Calu3 (cell line): ENCODE measurements at regions of chr4 and their contacts with region 1.

Region 1: GRCh38 chr4:143085224-143085623 is 99.5 kb upstream of the USP38 start:
- DNase-seq: no peak
- H3K4me3 Mint-ChIP-seq: no peak overlapping the region
- H3K27ac Mint-ChIP-seq: no peak overlapping the region
- H3K4me1 Mint-ChIP-seq: peaks cover 61% of the 10 kb centered on the region
- H3K27me3 Mint-ChIP-seq: no peaks in the 10 kb centered on the region
- CTCF ChIP-seq: no peak

Region 2: DNA sequence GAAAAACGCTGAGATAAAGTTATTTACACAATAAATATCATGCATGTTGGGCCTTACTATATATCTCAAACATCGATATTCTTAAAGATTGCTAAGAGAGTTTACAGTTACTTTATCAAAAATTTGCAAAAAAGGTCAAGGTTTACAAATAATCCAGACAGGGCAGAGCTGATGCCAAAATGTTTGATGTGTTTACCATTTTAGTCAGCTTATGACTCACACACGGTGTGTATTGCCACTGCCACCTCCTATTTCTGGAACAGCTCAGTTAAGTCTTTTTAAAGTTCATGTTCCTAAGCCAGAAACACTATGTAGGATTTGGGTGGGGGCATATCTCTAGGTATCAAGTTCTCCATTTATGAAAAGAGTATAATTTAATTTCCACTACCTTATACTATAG is 819.7 kb before region 1 on chr4:
- CTCF ChIA-PET with region 1: no interaction called
- intact Hi-C with region 1: no loop called
- DNase-seq: peak; percentile 11
- H3K4me3 Mint-ChIP-seq: peak overlapping the region; percentile 24
- H3K27ac Mint-ChIP-seq: peak overlapping the region; percentile 81
- H3K4me1 Mint-ChIP-seq: peaks cover 39% of the 10 kb centered on the region
- H3K27me3 Mint-ChIP-seq: no peaks in the 10 kb centered on the region
- CTCF ChIP-seq: no peak

Region 3: DNA sequence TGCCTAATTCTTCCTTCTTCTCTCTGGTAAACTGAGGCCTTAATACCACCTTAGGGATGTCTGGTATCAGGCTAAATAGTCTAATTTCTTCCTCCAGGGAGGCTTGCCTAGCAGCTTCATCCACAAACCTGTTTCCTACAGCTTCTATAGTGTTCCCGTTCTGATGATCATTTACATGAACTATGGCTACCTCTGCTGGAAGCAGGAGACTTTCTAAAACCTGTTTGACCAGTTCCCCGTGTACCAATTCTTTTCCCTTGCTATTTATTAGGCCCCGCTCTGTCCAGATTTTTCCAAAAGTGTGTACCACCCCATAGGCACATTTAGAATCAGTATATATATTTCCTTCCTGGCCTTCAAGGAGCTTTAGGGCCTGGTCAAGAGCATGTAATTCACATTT is 93.7 kb after region 1 on chr4:
- CTCF ChIA-PET with region 1: no interaction called
- intact Hi-C with region 1: loop called (anchors 2 kb)
- DNase-seq: peak; percentile 43
- H3K4me3 Mint-ChIP-seq: peak overlapping the region; percentile 35
- H3K27ac Mint-ChIP-seq: peak overlapping the region; percentile 43
- H3K4me1 Mint-ChIP-seq: peaks cover 17% of the 10 kb centered on the region
- H3K27me3 Mint-ChIP-seq: no peaks in the 10 kb centered on the region
- CTCF ChIP-seq: no peak